ENCODE measurements at regions of chr11 and their contacts with region 1.

Region 1: DNA sequence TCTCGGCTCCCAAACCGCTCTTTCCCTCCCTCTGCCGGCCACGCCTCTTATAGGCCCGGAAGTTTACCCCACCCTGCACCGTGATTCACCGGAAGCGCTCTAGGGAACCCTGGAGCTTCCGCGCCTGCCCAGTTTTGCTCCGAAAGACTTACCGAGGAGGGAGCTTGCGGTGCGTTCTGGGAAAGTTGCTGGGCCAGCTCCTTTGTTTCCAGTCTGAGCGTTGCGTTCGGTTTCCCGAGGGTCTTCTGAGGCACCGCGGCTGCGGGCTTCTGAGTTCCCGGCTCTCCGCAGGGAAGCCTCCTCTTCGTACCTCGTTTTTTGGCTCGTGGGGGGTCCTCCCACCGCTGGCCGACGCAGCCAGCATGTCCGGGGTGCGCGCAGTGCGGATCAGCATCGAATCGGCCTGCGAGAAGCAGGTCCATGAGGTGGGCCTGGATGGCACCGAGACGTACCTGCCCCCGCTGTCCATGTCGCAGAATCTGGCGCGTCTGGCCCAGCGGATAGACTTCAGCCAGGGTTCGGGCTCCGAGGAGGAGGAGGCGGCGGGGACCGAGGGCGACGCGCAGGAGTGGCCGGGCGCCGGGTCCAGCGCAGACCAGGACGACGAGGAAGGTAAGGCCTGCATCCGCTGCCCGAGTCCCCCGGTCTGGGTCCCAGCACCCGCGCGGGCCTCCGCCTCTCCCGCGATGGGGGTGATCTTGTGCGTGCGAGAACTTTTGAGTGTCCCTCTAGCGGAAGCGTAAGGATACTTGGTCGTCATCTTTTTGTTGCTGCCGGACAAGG is at the start of gene MED17:
- DNase-seq: peak; percentile 60 to 95
- H3K4me3 ChIP-seq: peak within 1 kb of the TSS; percentile 96 to 97
- H3K27ac ChIP-seq: peak within 1 kb of the TSS; percentile 91 to 97
- H3K4me1 ChIP-seq: peaks cover 13 to 20% of the 10 kb centered on the region in 2 donors
- H3K27me3 ChIP-seq: no peaks in the 10 kb centered on the region
- CTCF ChIP-seq: peak; percentile 33 to 47 (median 38)
- total RNA-seq, gene MED17: 12.6 TPM

Region 2: DNA sequence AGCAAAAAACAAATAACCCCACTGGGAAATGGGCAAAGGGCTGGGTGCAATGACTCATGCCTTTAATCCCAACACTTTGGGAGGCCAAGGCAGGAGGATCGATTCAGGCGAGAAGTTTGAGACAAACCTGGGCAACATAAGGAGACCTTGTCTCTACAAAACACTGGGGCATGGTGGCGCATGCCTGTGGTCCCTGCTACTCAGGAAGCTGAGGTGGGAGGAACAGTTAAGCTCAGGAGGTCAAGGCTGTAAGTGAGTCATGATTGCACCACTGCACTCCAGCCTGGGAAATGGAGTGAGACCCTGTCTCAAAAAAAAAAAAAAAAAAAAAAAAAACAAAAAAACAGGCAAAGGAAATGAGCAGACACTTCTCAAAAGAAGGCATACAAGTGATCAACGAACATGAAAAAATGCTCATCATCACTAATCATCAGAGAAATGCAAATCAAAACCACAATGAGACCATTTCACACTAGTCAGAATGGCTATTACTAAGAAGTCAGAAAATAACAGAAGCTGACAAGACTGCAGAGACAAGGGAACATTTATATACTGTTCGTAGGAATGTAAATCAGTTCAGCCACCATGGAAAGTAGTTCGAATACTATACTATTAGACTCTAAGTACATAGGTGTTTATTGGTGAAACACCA is 193.0 kb before region 1 on chr11:
- intact Hi-C with region 1: no loop called
- DNase-seq: no peak
- H3K4me3 ChIP-seq: no peak overlapping the region
- H3K27ac ChIP-seq: no peak overlapping the region
- H3K4me1 ChIP-seq: no peaks in the 10 kb centered on the region
- H3K27me3 ChIP-seq: no peaks in the 10 kb centered on the region
- CTCF ChIP-seq: no peak

Region 3: DNA sequence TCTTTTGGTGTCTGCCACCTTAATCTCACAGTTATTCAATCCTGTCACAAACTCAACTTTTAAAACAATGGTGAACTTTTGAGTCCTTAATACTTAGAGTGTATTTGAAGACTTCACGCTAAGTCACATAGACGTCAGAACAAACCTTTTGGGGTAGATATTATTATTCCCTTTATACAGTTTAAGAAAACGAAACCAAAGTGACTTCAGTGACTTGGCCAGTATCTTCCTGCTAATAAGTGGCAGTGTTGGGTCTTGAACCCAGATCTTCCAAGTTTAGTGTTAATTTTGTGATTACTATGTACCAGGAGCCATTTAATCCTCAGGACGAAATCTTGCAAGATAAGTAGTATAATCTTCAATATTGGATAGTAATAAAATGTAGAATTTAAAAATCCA is 122.2 kb before region 1 on chr11:
- intact Hi-C with region 1: loop called (anchors 5 kb)
- DNase-seq: no peak
- H3K4me3 ChIP-seq: peak overlapping the region; percentile 83 to 93
- H3K27ac ChIP-seq: peak overlapping the region; percentile 74 to 83
- H3K4me1 ChIP-seq: no peaks in the 10 kb centered on the region
- H3K27me3 ChIP-seq: no peaks in the 10 kb centered on the region
- CTCF ChIP-seq: no peak

Region 4: GRCh38 chr11:93689240-93689639 is 95.1 kb before region 1 on chr11:
- intact Hi-C with region 1: no loop called
- DNase-seq: no peak
- H3K4me3 ChIP-seq: no peak overlapping the region
- H3K27ac ChIP-seq: no peak overlapping the region
- H3K4me1 ChIP-seq: peaks cover 0 to 4% of the 10 kb centered on the region in 2 donors
- H3K27me3 ChIP-seq: no peaks in the 10 kb centered on the region
- CTCF ChIP-seq: no peak

Measured in ascending aorta (tissue), 2 donors.